Activated B cell treated with CpG ODN at 0.5 μM for 24 hours (primary cell): ENCODE measurements at regions of chr14 and their contacts with region 1.

Region 1: GRCh38 chr14:60768602-60769001 is 34.0 kb downstream of the MNAT1 start:
- DNase-seq: no peak
- ATAC-seq: no peak
- H3K4me3 Mint-ChIP-seq: no peak overlapping the region
- H3K27ac Mint-ChIP-seq: no peak overlapping the region
- H3K4me1 Mint-ChIP-seq: peaks cover 9% of the 10 kb centered on the region
- H3K27me3 Mint-ChIP-seq: no peaks in the 10 kb centered on the region
- CTCF ChIP-seq: no peak

Region 2: GRCh38 chr14:60800409-60800808 is 31.8 kb after region 1 on chr14:
- CTCF ChIA-PET with region 1: no interaction called
- POLR2A ChIA-PET with region 1: no interaction called
- intact Hi-C with region 1: loop called (anchors 5 kb)
- DNase-seq: no peak
- ATAC-seq: no peak
- H3K4me3 Mint-ChIP-seq: no peak overlapping the region
- H3K27ac Mint-ChIP-seq: no peak overlapping the region
- H3K4me1 Mint-ChIP-seq: no peaks in the 10 kb centered on the region
- H3K27me3 Mint-ChIP-seq: no peaks in the 10 kb centered on the region
- CTCF ChIP-seq: no peak